PC-3 (cell line): ENCODE measurements at regions of chr13 and their contacts with region 1.

Region 1: GRCh38 chr13:64020126-64020525 is 2604.5 kb upstream of the PCDH20 start:
- DNase-seq: no peak
- ATAC-seq: no peak
- H3K4me3 ChIP-seq: no peak overlapping the region
- H3K27ac ChIP-seq: no peak overlapping the region
- H3K4me1 ChIP-seq: no peaks in the 10 kb centered on the region
- H3K27me3 ChIP-seq: no peaks in the 10 kb centered on the region
- CTCF ChIP-seq: no peak

Region 2: GRCh38 chr13:64362564-64362963 is 342.4 kb after region 1 on chr13:
- CTCF ChIA-PET with region 1: interaction called, 12 read pairs
- POLR2A ChIA-PET with region 1: no interaction called
- intact Hi-C with region 1: no loop called
- DNase-seq: no peak
- ATAC-seq: no peak
- H3K4me3 ChIP-seq: no peak overlapping the region
- H3K27ac ChIP-seq: no peak overlapping the region
- H3K4me1 ChIP-seq: no peaks in the 10 kb centered on the region
- H3K27me3 ChIP-seq: no peaks in the 10 kb centered on the region
- CTCF ChIP-seq: no peak